ENCODE measurements at regions of chr17 and their contacts with region 1.

Region 1: GRCh38 chr17:6666077-6666521 is 14.5 kb downstream of the C17orf100 start:
- DNase-seq: peak; percentile 72
- H3K4me3 ChIP-seq: no peak overlapping the region
- H3K27ac ChIP-seq: no peak overlapping the region
- H3K4me1 ChIP-seq: no peaks in the 10 kb centered on the region
- H3K27me3 ChIP-seq: no peaks in the 10 kb centered on the region
- CTCF ChIP-seq: peak; percentile 78

Region 2: DNA sequence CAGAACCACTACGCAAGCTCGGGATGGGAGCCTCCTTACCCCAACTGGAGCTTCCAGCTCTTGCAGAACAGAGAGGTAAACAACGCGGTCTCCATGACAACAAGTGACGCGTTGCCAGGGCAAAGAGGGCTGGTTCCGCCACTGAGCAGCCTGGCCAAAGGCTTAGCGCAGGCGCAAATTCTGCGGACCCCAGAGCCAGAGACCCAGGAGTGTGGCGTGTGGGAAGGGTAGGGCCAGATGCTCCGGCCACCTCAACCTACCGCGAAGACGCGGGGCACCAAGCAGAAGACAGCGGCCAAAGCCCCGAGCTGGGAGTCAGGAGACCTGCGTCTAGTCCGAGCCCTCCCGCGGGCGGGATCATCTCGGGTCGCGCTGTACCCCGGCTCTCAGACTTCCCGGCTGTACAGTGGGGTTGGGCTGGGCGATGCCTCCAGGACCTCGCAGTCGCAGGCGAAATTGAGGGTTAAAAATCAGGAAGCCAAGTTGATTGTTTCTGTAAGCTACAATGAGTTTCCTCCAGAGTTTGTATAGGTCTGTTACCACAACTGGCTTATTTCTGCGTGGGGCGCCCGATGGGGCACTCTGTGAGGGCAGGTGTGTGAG is 165.7 kb after region 1 on chr17 and contains the start of gene TEKT1:
- intact Hi-C with region 1: loop called (anchors 10 kb)
- DNase-seq: peak; percentile 55
- H3K4me3 ChIP-seq: peak within 1 kb of the TSS; percentile 17
- H3K27ac ChIP-seq: no peak within 1 kb of the TSS
- H3K4me1 ChIP-seq: peaks cover 5% of the 10 kb centered on the region
- H3K27me3 ChIP-seq: peaks cover 28% of the 10 kb centered on the region
- CTCF ChIP-seq: no peak
- total RNA-seq, gene TEKT1: not detected

Region 3: GRCh38 chr17:7136266-7136877 is 470.3 kb after region 1 on chr17:
- intact Hi-C with region 1: no loop called
- DNase-seq: peak; percentile 77
- H3K4me3 ChIP-seq: no peak overlapping the region
- H3K27ac ChIP-seq: no peak overlapping the region
- H3K4me1 ChIP-seq: no peaks in the 10 kb centered on the region
- H3K27me3 ChIP-seq: no peaks in the 10 kb centered on the region
- CTCF ChIP-seq: peak; percentile 89

Measured in colonic mucosa (tissue), 4 donors.